ENCODE measurements at regions of chr1 and their contacts with region 1.

Region 1: GRCh38 chr1:28078680-28079626 is 9.5 kb downstream of the EYA3 start:
- ATAC-seq: peak in 1 of 8 experiments; percentile 38
- H3K4me3 ChIP-seq: no peak overlapping the region
- H3K27ac ChIP-seq: no peak overlapping the region
- H3K4me1 ChIP-seq: no peaks in the 10 kb centered on the region

Region 2: DNA sequence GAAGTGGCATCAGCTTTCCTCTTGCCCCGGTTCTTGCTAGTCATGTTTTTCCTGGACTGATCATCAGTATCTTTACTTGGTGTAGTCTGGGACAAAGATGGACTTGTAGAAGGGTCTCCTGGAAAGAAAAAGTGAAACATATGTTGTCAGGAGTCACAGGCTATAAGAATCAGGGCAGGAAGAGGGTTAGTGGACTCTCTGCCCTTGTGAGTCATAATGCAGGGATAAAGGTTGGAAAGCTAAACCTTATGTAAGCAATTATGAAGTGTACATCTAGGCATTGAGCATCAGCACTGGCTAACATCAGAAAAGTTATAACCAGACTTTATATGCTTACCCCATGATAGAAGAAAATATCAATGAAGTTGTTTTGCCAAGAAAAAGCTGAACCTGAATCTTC is 68.0 kb before region 1 on chr1:
- in situ Hi-C with region 1: loop called in 1 of 9 experiments (anchors 10 kb)
- ATAC-seq: no peak
- H3K4me3 ChIP-seq: no peak overlapping the region
- H3K27ac ChIP-seq: no peak overlapping the region
- H3K4me1 ChIP-seq: no peaks in the 10 kb centered on the region

Region 3: DNA sequence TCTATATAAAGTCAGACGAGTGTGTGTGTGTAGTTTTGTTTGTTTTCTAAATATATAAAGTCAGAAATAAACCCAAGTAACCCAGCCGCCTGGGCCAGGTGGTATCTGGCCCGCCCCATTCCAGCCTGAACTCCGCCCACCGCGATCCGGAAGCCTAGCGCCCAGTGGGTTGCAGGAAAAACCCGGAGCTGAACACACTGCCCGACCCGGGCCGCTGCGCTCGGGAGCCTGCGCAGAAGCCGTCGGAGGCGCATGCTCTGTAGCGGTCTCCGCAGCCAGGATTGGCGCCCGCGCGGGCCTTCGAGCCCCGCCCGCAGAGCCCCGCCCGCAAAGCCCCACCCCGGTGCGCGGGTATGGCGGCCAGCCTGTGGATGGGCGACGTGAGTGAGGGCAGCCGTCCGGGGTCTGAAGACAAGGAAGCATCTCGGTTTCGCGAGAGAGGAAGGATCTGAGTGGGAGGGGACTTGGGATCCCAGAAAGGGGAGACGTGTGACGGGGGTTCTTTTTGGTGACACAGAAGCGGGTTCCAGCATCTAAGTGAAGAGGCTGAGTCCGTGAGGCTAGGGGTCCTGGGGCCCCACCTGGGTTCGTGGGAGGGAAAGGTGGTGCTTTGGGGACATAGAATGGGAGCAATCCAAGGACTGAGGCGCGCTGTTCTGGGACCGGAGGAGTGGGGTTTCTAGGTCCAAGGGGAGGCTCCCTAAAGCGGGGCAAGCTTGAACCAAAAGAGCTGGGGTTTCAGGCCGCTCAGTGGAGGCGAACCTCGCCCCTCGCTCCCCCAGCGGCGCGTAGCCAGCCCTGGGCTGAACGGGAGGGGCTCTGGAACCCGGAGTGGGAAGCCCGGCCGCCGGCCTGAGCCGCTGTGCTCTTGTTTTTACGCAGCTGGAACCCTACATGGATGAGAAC is 474.1 kb after region 1 on chr1 and contains the start of gene TRNAU1AP:
- in situ Hi-C with region 1: no loop called
- ATAC-seq: peak; percentile 88 to 94 (median 92)
- H3K4me3 ChIP-seq: peak within 1 kb of the TSS; percentile 52 to 83 (median 67)
- H3K27ac ChIP-seq: peak within 1 kb of the TSS; percentile 71 to 83
- H3K4me1 ChIP-seq: peaks cover 5 to 8% of the 10 kb centered on the region in 2 donors
- total RNA-seq, gene TRNAU1AP: 11.7 to 40.1 (median 33.0) TPM